ENCODE measurements at regions of chr20 and their contacts with region 1.

Region 1: GRCh38 chr20:21099751-21100577 is 6.2 kb downstream of the LINC00237 start:
- DNase-seq: peak; percentile 65
- ATAC-seq: peak; percentile 50
- H3K4me3 ChIP-seq: peak overlapping the region; percentile 62 to 77 (median 71)
- H3K4me3 Mint-ChIP-seq: peak overlapping the region; percentile 95
- H3K27ac ChIP-seq: peak overlapping the region in 1 of 2 donors; percentile 16
- H3K27ac Mint-ChIP-seq: peak overlapping the region; percentile 88
- H3K4me1 ChIP-seq: peaks cover 45 to 51% of the 10 kb centered on the region in 2 donors
- H3K4me1 Mint-ChIP-seq: peaks cover 30% of the 10 kb centered on the region
- H3K27me3 ChIP-seq: peaks cover 1 to 85% (median 64%) of the 10 kb centered on the region in 4 experiments
- H3K27me3 Mint-ChIP-seq: peaks cover 74% of the 10 kb centered on the region
- CTCF ChIP-seq: no peak

Region 2: GRCh38 chr20:21083885-21084284 is 16.1 kb before region 1 on chr20:
- CTCF ChIA-PET with region 1: no interaction called
- POLR2A ChIA-PET with region 1: no interaction called
- intact Hi-C with region 1: no loop called
- DNase-seq: no peak
- ATAC-seq: no peak
- H3K4me3 ChIP-seq: no peak overlapping the region
- H3K4me3 Mint-ChIP-seq: no peak overlapping the region
- H3K27ac ChIP-seq: no peak overlapping the region
- H3K27ac Mint-ChIP-seq: no peak overlapping the region
- H3K4me1 ChIP-seq: no peaks in the 10 kb centered on the region
- H3K4me1 Mint-ChIP-seq: no peaks in the 10 kb centered on the region
- H3K27me3 ChIP-seq: peaks cover 0 to 22% (median 10%) of the 10 kb centered on the region in 4 experiments
- H3K27me3 Mint-ChIP-seq: peaks cover 45% of the 10 kb centered on the region
- CTCF ChIP-seq: no peak

Region 3: DNA sequence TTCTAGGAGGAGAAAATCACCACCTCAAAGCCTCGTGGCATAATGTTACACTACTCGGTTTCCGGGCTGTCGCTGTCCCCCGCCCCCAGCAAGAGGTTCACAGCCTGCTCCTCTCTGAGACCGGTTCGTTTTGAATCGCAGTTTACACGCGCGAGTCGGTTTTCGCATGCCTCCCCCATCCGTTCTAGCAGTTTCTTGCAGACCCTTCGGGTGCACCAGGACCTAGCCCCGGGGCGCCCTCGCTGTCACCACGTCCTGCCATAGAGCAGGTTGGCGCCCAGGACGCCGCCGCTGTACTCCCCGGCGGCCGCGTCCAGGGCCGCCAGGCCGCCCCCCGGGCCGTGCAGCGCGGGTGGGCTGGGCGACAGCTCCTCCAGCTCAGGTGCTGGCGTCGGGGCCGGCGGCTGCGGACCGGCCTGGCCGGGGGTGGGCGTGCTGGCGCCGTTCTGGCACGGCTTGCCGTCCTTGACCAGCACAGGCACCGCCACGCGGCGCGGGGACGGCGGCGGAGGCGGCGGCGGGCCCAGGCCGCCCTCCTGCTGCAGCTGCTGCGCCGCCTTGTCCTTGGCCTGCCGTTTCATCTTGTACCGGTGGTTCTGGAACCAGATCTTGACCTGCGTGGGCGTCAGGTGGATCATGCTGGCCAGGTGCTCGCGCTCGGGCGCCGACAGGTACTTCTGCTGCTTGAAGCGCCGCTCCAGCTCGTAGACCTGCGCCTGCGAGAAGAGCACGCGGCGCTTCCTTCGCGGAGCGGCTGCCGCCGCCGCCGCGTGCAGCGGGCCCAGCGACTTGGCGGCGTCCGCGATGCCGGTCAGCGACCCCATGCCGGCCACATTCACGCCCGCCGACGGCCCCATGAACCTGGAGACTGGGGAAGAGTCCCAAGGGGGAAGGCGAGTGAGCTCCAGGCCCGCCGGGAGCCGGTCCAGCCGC is 296.0 kb after region 1 on chr20:
- CTCF ChIA-PET with region 1: no interaction called
- POLR2A ChIA-PET with region 1: no interaction called
- intact Hi-C with region 1: loop called (anchors 5 kb)
- DNase-seq: peak; percentile 65
- ATAC-seq: no peak
- H3K4me3 ChIP-seq: peak overlapping the region in 1 of 5 experiments; percentile 3
- H3K4me3 Mint-ChIP-seq: peak overlapping the region; percentile 63
- H3K27ac ChIP-seq: no peak overlapping the region
- H3K27ac Mint-ChIP-seq: no peak overlapping the region
- H3K4me1 ChIP-seq: peaks cover 12 to 30% of the 10 kb centered on the region in 2 donors
- H3K4me1 Mint-ChIP-seq: peaks cover 21% of the 10 kb centered on the region
- H3K27me3 ChIP-seq: peaks cover 6 to 71% (median 48%) of the 10 kb centered on the region in 4 experiments
- H3K27me3 Mint-ChIP-seq: peaks cover 63% of the 10 kb centered on the region
- CTCF ChIP-seq: no peak

Measured in B cell (primary cell).